Left cardiac atrium (tissue), 4 donors: ENCODE measurements at regions of chr7 and their contacts with region 1.

Region 1: GRCh38 chr7:137898839-137899721 is 52.3 kb upstream of the DGKI start:
- DNase-seq: peak; percentile 88
- ATAC-seq: peak; percentile 90 to 94

Region 2: DNA sequence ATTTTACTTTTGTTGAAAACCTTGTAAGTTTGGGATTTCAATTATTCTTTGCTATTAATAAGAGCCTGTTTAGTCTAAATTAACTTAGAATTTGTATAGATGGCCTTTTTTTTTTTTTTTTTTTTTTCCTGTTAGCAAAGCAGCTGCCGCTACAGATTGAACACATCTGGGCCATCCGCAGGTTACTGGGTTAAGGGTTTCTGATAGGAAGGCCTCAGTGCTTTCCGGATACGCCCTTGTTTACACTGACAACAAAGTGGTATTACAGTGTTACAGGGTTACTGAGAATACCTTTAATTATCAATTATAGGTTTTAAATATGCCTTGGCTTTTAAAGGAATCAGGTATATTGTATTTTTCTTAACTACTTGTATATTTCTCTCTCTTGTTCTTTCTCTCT is 632.3 kb before region 1 on chr7:
- intact Hi-C with region 1: no loop called
- DNase-seq: no peak
- ATAC-seq: no peak

Region 3: GRCh38 chr7:137475966-137476365 is 423.1 kb before region 1 on chr7:
- intact Hi-C with region 1: no loop called
- DNase-seq: no peak
- ATAC-seq: peak in 1 of 2 donors; percentile 93

Region 4: DNA sequence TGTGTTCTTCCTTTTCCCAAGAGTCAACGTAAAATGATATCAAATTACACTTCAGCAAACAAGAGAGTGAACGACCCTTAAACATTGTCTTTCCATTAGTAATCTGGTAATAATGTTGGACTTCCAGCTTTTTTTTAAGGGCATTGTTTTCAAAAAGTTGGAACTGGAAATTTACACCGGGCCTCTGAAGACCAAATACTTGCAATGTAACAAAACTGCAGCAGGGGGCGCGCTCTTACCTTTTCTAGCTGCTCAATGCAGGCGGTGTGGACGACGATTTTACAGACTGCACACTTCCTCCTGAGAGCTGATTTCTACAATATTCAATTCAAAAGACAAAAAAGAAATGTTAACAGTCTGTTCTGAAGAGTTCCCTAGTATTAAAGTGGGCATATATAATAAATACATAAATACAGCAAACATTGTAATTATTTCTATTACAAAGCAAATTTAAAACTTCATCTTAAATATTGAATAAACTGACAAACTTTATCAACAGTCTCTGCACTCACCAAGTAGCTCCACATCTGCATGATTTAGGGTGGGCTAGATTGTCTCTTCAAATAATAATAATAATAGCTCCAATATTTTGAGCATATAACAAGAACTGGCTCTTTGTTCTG is 242.7 kb before region 1 on chr7:
- intact Hi-C with region 1: loop called (anchors 2 to 5 kb)
- DNase-seq: peak; percentile 85
- ATAC-seq: peak; percentile 79 to 85

Region 5: DNA sequence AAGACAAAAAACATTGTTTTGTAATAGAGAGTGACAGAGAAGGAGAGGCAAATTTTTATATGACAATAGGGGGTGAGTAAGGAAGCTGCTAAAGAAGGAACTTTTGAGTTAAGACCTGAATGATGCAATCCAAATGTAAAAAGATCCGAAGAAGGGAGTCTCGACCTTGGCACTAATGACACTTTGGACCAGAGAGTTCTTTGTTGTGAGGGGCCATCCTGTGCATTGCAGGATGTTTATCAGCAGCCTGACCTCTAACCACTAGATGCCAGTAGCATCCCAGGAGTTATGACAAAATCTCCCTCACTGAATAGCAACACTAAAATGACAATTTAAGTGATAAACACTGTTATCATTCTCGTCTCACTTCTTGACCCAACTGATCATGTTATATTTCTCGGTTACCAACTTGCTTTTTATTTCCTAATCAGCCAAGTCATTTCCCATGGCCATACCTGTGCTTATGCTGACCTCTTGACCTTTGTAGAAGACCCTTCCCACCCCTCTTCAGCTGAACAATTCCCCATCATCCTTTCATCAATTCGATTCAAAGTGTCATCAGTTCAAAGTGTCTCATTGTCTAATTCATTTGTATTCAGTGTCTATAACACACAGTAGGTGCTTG is 82.3 kb before region 1 on chr7:
- intact Hi-C with region 1: loop called in 1 of 2 experiments (anchors 5 kb)
- DNase-seq: no peak
- ATAC-seq: no peak

Region 6: GRCh38 chr7:138008547-138009349 is 109.7 kb after region 1 on chr7:
- intact Hi-C with region 1: loop called (anchors 1 to 2 kb)
- DNase-seq: no peak
- ATAC-seq: peak; percentile 56 to 58

Region 7: GRCh38 chr7:138738551-138739335 is 839.7 kb after region 1 on chr7:
- intact Hi-C with region 1: loop called in 1 of 2 experiments (anchors 10 kb)
- DNase-seq: peak; percentile 84
- ATAC-seq: peak; percentile 85 to 86